BJ (cell line): ENCODE measurements at regions of chr1 and their contacts with region 1.

Region 1: DNA sequence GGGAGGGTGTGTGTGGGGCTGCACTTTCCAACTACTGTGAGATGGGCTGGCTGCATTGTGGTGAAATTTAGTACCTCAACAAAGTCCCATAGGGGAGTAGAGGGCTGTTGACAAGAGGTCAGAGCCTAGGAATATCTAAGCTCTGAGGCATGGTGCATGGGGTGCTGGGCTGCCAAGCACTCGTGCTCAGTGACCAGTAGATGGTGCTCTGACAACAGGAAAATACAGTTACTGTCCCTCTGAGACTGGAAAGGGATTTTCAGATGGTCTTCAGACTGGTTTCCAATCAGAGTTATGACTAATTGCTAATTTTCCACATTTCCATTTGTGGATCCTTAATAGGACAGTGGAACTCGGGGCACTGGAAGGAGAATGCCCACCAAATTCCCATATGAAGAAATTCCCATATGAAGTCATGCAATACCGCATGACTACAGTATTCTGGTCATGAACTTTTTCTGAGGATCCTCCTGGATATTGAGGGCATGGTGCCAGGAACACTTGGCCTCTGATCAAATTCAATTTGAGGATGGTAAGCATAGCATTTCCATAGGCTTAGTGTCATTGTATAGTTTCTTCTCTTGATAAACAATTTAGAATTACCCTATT is 4.1 kb upstream of the CACNA1E start:
- DNase-seq: peak; percentile 4
- H3K4me3 ChIP-seq: no peak overlapping the region
- H3K27me3 ChIP-seq: peaks cover 26% of the 10 kb centered on the region
- CTCF ChIP-seq: peak; percentile 78

Region 2: DNA sequence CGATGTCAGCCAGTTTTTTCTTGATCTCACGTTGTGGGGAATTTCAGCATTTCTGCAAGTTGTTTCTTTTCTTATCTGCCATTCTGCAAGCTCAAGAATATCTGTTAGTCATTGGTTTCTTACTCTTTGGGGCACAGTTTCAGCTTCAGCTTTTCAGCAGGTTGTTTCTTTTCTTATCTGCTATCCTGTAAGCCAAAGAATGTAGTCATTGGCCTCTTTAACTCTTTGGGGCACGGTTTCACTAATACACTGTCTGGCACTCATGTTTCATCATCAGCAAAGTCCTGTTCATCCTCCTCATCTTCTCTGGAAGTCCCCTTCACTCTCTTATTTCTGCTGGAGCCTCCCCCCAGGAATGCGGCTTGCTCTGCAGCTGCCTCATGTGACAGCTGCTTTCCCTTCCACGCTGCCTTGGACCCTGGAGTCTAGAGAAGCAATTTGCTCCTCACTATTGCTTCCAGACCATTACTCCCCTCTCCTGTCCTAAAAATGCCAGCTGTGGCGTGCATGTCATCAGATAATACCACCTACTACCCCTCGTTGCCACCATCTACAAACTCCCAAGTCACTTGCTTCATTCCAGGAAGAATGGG is 62.9 kb before region 1 on chr1:
- CTCF ChIA-PET with region 1: no interaction called
- POLR2A ChIA-PET with region 1: no interaction called
- DNase-seq: no peak
- H3K4me3 ChIP-seq: no peak overlapping the region
- H3K27me3 ChIP-seq: no peaks in the 10 kb centered on the region
- CTCF ChIP-seq: no peak

Region 3: GRCh38 chr1:182054698-182055326 is 575.6 kb after region 1 on chr1:
- CTCF ChIA-PET with region 1: interaction called, 24 read pairs
- POLR2A ChIA-PET with region 1: no interaction called
- DNase-seq: no peak
- H3K4me3 ChIP-seq: no peak overlapping the region
- H3K27me3 ChIP-seq: no peaks in the 10 kb centered on the region; the same call in 1 of the 2 replicates
- CTCF ChIP-seq: peak; percentile 45